Aorta (tissue), 5 donors: ENCODE measurements at regions of chr5 and their contacts with region 1.

Region 1: DNA sequence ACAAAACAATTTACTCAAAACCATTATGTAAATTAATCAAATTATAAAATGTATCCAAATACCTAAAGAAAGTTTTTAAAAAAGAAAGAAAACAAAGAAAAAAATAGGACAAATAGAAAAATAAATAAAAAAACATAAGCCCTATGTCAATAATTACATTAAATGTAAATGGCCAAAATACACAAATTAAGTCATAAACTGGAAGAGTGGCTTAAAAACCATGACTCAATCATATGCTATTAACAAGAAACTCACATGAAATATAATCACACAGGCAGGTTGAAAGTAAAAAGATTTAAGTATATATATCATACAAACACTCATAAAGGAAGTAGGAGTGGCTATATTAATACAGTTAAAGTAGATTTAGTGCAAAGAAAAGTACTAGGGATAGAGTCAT is 95.3 kb downstream of the PRELID2 start:
- DNase-seq: no peak
- ATAC-seq: no peak
- H3K4me3 ChIP-seq: no peak overlapping the region
- H3K27ac ChIP-seq: no peak overlapping the region
- H3K4me1 ChIP-seq: no peaks in the 10 kb centered on the region
- H3K27me3 ChIP-seq: no peaks in the 10 kb centered on the region

Region 2: GRCh38 chr5:145378226-145378625 is 361.6 kb before region 1 on chr5:
- intact Hi-C with region 1: loop called in 1 of 2 experiments (anchors 10 kb)
- DNase-seq: no peak
- ATAC-seq: no peak
- H3K4me3 ChIP-seq: no peak overlapping the region
- H3K27ac ChIP-seq: no peak overlapping the region
- H3K4me1 ChIP-seq: no peaks in the 10 kb centered on the region
- H3K27me3 ChIP-seq: no peaks in the 10 kb centered on the region

Region 3: GRCh38 chr5:145834917-145835847 is 95.3 kb after region 1 on chr5 and contains the start of gene PRELID2:
- intact Hi-C with region 1: no loop called
- DNase-seq: peak; percentile 94 to 96
- ATAC-seq: peak; percentile 94
- H3K4me3 ChIP-seq: peak within 1 kb of the TSS; percentile 37 to 92
- H3K27ac ChIP-seq: peak within 1 kb of the TSS; percentile 67 to 69
- H3K4me1 ChIP-seq: peaks cover 0 to 7% of the 10 kb centered on the region in 2 donors
- H3K27me3 ChIP-seq: no peaks in the 10 kb centered on the region
- total RNA-seq, gene PRELID2: 26.7 to 28.7 TPM